Activated T-helper 1 cell treated with anti-CD3 and anti-CD28 coated beads, Interleukin-12 subunit alpha, Interleukin-12 subunit beta, Interleukin-2, Interleukin-4 antibody, amounts not matched to agents 30 ng/mL and 10 ng/mL and 1 ng/mL, durations not matched to agents 14 hours and 24 hours and 36 hours (primary cell): ENCODE measurements at regions of chr22 and their contacts with region 1.

Region 1: GRCh38 chr22:45064313-45065278 is 54.8 kb upstream of the PHF21B start:
- DNase-seq: peak; percentile 39
- H3K4me3 Mint-ChIP-seq: no peak overlapping the region
- H3K27ac Mint-ChIP-seq: peak overlapping the region; percentile 74
- H3K4me1 Mint-ChIP-seq: peaks cover 19% of the 10 kb centered on the region
- H3K27me3 Mint-ChIP-seq: peaks cover 6% of the 10 kb centered on the region

Region 2: GRCh38 chr22:45036154-45036553 is 28.4 kb before region 1 on chr22:
- intact Hi-C with region 1: no loop called
- DNase-seq: no peak
- H3K4me3 Mint-ChIP-seq: no peak overlapping the region
- H3K27ac Mint-ChIP-seq: no peak overlapping the region
- H3K4me1 Mint-ChIP-seq: no peaks in the 10 kb centered on the region
- H3K27me3 Mint-ChIP-seq: peaks cover 3% of the 10 kb centered on the region

Region 3: GRCh38 chr22:45129703-45130524 is 65.3 kb after region 1 on chr22:
- intact Hi-C with region 1: loop called (anchors 2 kb)
- DNase-seq: peak; percentile 21
- H3K4me3 Mint-ChIP-seq: peak overlapping the region; percentile 29
- H3K27ac Mint-ChIP-seq: peak overlapping the region; percentile 75
- H3K4me1 Mint-ChIP-seq: peaks cover 22% of the 10 kb centered on the region
- H3K27me3 Mint-ChIP-seq: no peaks in the 10 kb centered on the region